Esophagus muscularis mucosa (tissue), 4 donors: ENCODE measurements at regions of chr13 and their contacts with region 1.

Region 1: GRCh38 chr13:41263261-41264027 is at the start of gene MTRF1:
- DNase-seq: peak; percentile 92
- H3K4me3 ChIP-seq: peak within 1 kb of the TSS; percentile 63 to 83 (median 72)
- H3K27ac ChIP-seq: peak within 1 kb of the TSS; percentile 81 to 84 (median 84)
- H3K4me1 ChIP-seq: peaks cover 6 to 11% (median 7%) of the 10 kb centered on the region in 4 donors
- H3K27me3 ChIP-seq: no peaks in the 10 kb centered on the region
- CTCF ChIP-seq: no peak
- EP300 ChIP-seq: no peak
- POLR2A ChIP-seq: no peak
- total RNA-seq, gene MTRF1: 6.4 to 18.7 (median 8.9) TPM

Region 2: DNA sequence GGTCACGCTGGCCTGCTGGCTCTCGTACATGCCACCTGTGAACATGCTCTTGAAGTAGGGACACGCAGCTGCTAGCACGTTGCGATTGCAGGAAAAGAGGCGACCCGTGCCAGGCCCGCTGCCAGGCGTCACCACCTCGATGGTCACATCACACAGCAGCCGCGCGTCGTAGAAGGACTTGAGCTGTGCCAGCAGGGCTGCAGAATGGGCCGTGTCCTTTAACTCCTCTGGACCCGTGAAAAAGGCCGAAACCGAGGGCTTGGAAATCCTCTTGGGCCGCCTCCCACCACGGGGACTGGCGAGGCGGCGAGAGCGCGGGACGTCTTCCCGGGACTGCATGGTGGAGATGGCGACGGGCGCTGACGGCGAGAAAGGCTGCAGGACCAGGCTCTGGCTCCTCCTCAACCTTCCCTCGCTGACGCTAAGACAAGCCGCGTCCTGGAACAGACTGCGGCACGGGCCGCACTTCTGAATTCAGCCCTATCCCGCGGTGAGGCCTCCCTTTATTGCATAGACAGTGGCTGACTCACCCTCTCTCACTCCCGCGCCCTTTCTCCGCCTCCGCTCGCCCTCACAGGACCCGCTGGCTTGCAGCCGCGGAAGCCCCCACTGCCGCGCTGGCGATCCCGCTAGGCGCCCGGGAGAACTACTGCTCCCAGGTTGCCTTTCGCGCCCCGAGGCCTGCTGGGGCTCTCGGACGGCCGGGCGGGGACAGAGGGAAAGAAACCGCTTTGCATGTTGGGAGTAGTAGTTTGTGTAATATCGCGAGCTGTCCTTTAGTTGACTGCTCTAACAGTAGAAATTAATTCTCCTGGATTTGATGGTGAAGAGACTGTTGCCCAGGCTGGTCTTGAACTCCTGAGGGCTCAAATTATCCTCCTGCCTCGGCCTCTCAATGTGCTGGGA is 69.3 kb before region 1 on chr13 and contains the start of gene KBTBD7:
- intact Hi-C with region 1: loop called (anchors 5 kb)
- DNase-seq: peak; percentile 97
- H3K4me3 ChIP-seq: peak within 1 kb of the TSS; percentile 67 to 85 (median 76)
- H3K27ac ChIP-seq: peak within 1 kb of the TSS; percentile 88 to 91 (median 90)
- H3K4me1 ChIP-seq: peaks cover 18 to 28% (median 22%) of the 10 kb centered on the region in 4 donors
- H3K27me3 ChIP-seq: no peaks in the 10 kb centered on the region
- CTCF ChIP-seq: peak; percentile 5 to 17 (median 7)
- EP300 ChIP-seq: no peak
- POLR2A ChIP-seq: no peak
- total RNA-seq, gene KBTBD7: 4.0 to 10.3 (median 7.7) TPM

Region 3: GRCh38 chr13:41310963-41311606 is 47.6 kb after region 1 on chr13 and contains the start of gene NAA16:
- intact Hi-C with region 1: loop called (anchors 5 kb)
- DNase-seq: peak; percentile 96
- H3K4me3 ChIP-seq: peak within 1 kb of the TSS; percentile 87 to 98 (median 92)
- H3K27ac ChIP-seq: peak within 1 kb of the TSS; percentile 91 to 97 (median 94)
- H3K4me1 ChIP-seq: peaks cover 20 to 40% (median 39%) of the 10 kb centered on the region in 4 donors
- H3K27me3 ChIP-seq: no peaks in the 10 kb centered on the region
- CTCF ChIP-seq: no peak
- EP300 ChIP-seq: no peak
- POLR2A ChIP-seq: peak; percentile 64
- total RNA-seq, gene NAA16: 13.8 to 22.0 (median 14.9) TPM